Activated CD4-positive, alpha-beta T cell treated with anti-CD3 and anti-CD28 coated beads for 36 hours (primary cell): ENCODE measurements at regions of chr5 and their contacts with region 1.

Region 1: GRCh38 chr5:36690041-36690961 is 83.9 kb downstream of the SLC1A3 start:
- DNase-seq: peak; percentile 85
- ATAC-seq: peak; percentile 87
- H3K4me3 Mint-ChIP-seq: peak overlapping the region; percentile 75
- H3K27ac Mint-ChIP-seq: peak overlapping the region; percentile 66
- H3K4me1 Mint-ChIP-seq: peaks cover 12% of the 10 kb centered on the region
- H3K27me3 Mint-ChIP-seq: peaks cover 23% of the 10 kb centered on the region

Region 2: DNA sequence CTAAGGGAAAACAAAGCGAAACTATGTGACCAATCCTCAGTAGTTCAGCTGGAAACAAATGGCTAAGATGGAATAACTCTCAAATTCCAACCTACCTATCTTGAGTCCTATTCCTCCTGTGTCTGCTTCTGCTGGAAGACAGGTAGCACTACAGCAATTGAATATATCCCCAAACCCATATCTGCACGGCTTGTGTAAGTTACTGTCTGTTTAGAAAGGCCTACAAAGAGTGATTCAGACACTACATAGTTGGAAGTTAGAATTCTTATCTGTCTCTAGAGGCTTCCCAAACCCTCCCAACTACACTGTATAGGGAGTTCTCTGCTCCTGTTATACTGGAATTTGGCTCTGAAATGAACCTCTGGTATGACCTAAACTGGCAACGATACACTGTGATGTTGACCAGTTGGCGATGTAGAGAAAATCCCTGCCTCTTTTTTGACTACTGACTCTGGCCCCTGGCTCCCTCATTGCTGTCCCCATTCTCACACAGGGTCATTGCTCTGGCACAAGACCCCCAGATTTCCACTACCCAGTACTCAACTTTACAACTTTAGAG is 426.0 kb before region 1 on chr5:
- CTCF ChIA-PET with region 1: interaction called, 4 read pairs
- POLR2A ChIA-PET with region 1: no interaction called
- intact Hi-C with region 1: loop called (anchors 1 kb)
- DNase-seq: no peak
- ATAC-seq: no peak
- H3K4me3 Mint-ChIP-seq: no peak overlapping the region
- H3K27ac Mint-ChIP-seq: no peak overlapping the region
- H3K4me1 Mint-ChIP-seq: no peaks in the 10 kb centered on the region
- H3K27me3 Mint-ChIP-seq: peaks cover 12% of the 10 kb centered on the region

Region 3: GRCh38 chr5:36414869-36415282 is 275.4 kb before region 1 on chr5:
- CTCF ChIA-PET with region 1: interaction called, 11 read pairs
- POLR2A ChIA-PET with region 1: no interaction called
- intact Hi-C with region 1: loop called in 1 of 2 experiments (anchors 1 kb)
- DNase-seq: no peak
- ATAC-seq: no peak
- H3K4me3 Mint-ChIP-seq: no peak overlapping the region
- H3K27ac Mint-ChIP-seq: no peak overlapping the region
- H3K4me1 Mint-ChIP-seq: peaks cover 7% of the 10 kb centered on the region
- H3K27me3 Mint-ChIP-seq: peaks cover 6% of the 10 kb centered on the region

Region 4: DNA sequence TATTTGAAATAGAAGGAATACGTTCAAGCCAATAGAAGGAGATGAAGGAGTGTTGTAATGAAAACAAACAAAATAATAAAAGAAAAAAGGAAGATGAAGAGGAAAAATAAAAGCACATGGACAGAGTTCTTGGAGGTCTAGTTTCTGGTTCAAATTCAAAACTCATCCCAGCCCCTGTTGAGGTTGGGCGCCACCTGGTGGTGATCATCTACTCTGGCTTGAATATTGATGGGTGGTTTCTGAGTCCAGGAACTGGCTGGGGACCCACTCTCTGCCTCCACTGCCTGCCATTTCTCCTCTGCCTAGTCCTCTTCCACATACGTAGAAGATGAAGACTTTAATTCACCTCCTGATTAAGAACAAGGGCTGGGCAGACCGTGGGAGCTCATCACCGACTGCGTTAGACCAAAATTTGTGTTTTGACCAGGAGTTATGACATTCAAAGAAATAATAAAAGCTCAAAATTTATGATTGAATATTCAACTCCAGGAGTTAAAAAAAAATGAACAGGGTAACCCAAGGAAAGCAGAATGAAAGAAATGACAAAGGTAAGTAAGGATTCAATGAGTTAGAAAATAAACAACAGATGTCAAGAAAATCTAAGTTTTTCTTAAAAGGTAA is 182.9 kb before region 1 on chr5:
- CTCF ChIA-PET with region 1: interaction called, 3 read pairs
- POLR2A ChIA-PET with region 1: no interaction called
- intact Hi-C with region 1: loop called (anchors 2 to 10 kb)
- DNase-seq: peak; percentile 87
- ATAC-seq: no peak
- H3K4me3 Mint-ChIP-seq: no peak overlapping the region
- H3K27ac Mint-ChIP-seq: no peak overlapping the region
- H3K4me1 Mint-ChIP-seq: no peaks in the 10 kb centered on the region
- H3K27me3 Mint-ChIP-seq: peaks cover 7% of the 10 kb centered on the region

Region 5: GRCh38 chr5:36606428-36607113 is 83.7 kb before region 1 on chr5 and contains the start of gene SLC1A3:
- CTCF ChIA-PET with region 1: interaction called, 4 read pairs
- POLR2A ChIA-PET with region 1: no interaction called
- intact Hi-C with region 1: loop called (anchors 1 to 5 kb)
- DNase-seq: peak; percentile 77
- ATAC-seq: peak; percentile 96
- H3K4me3 Mint-ChIP-seq: peak within 1 kb of the TSS; percentile 66
- H3K27ac Mint-ChIP-seq: peak within 1 kb of the TSS; percentile 26
- H3K4me1 Mint-ChIP-seq: peaks cover 18% of the 10 kb centered on the region
- H3K27me3 Mint-ChIP-seq: peaks cover 52% of the 10 kb centered on the region
- total RNA-seq, gene SLC1A3: 0.16 TPM

Region 6: GRCh38 chr5:36701085-36701698 is 10.9 kb after region 1 on chr5:
- CTCF ChIA-PET with region 1: interaction called, 15 read pairs
- POLR2A ChIA-PET with region 1: no interaction called
- intact Hi-C with region 1: no loop called
- DNase-seq: no peak
- ATAC-seq: no peak
- H3K4me3 Mint-ChIP-seq: no peak overlapping the region
- H3K27ac Mint-ChIP-seq: no peak overlapping the region
- H3K4me1 Mint-ChIP-seq: no peaks in the 10 kb centered on the region
- H3K27me3 Mint-ChIP-seq: peaks cover 4% of the 10 kb centered on the region

Region 7: GRCh38 chr5:38540314-38540713 is 1850.0 kb after region 1 on chr5:
- CTCF ChIA-PET with region 1: no interaction called
- POLR2A ChIA-PET with region 1: no interaction called
- intact Hi-C with region 1: no loop called
- DNase-seq: no peak
- ATAC-seq: no peak
- H3K4me3 Mint-ChIP-seq: no peak overlapping the region
- H3K27ac Mint-ChIP-seq: no peak overlapping the region
- H3K4me1 Mint-ChIP-seq: no peaks in the 10 kb centered on the region
- H3K27me3 Mint-ChIP-seq: peaks cover 20% of the 10 kb centered on the region